Activated CD4-positive, alpha-beta memory T cell treated with anti-CD3 and anti-CD28 coated beads, Interleukin-2, amount 10 ng/mL, durations not matched to agents 7 days and 5 days (primary cell): ENCODE measurements at regions of chr11 and their contacts with region 1.

Region 1: DNA sequence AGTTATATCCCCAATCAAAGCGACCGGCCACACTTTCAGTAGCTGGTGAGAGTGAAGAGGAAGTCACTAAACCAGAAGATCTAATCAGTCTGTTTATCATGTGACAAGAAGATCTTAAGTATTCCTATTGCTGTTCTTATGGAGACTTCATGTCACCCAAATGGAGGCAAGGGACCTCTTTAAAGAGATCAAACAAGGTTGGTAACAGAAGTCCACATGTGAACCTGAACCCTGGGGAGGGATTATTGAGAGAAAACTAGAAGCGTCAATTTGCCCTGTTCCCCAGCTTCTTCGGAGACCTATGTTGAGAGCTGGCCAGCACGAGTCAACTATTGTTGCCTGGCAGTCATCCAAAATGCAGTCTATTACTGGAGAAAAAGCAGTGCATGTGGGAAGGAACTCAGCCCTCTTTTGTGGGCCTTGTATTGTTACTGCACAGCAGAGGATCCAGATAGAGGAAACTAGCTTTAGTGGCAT is 76.9 kb upstream of the CTSC start:
- DNase-seq: no peak
- H3K4me3 Mint-ChIP-seq: peak overlapping the region; percentile 62
- H3K27ac Mint-ChIP-seq: peak overlapping the region; percentile 89
- H3K4me1 Mint-ChIP-seq: peaks cover 72% of the 10 kb centered on the region
- H3K27me3 Mint-ChIP-seq: no peaks in the 10 kb centered on the region

Region 2: GRCh38 chr11:88327061-88327460 is 87.4 kb before region 1 on chr11:
- CTCF ChIA-PET with region 1: no interaction called
- POLR2A ChIA-PET with region 1: interaction called, 17 read pairs
- DNase-seq: no peak
- H3K4me3 Mint-ChIP-seq: peak overlapping the region; percentile 5
- H3K27ac Mint-ChIP-seq: no peak overlapping the region
- H3K4me1 Mint-ChIP-seq: peaks cover 95% of the 10 kb centered on the region
- H3K27me3 Mint-ChIP-seq: no peaks in the 10 kb centered on the region

Region 3: DNA sequence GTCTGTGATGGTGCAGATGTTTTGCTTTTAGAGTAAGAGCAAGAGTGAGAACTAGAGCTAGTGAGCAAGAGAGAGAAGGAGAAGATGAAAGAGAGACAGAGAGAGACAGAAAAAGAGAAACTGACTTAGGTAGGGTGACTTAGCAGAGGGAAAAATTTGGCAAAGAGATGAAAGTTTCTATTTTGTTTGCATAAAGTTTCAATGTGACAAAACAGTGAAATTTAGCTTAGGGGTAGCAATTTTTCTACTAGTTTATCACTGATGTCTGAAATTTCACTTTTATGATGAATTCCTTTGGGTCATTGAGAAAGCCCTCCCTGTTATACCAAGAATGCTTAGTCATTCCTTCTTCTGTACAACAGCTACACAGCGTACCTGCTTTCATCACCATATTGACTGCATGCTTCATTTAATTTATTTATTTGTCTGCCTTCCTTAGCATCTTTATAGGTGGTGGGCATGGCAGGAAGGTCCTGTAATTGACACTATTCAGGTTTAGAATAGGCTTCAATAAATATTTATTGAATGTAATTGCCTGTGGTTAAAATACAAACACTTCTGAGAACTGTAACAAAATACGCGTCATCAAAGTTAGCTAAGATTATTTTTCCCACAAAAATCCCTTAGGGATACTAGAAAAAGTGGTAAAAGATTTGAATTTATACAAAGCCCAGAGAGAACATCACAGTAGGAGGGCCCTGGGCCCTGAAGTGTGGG is 56.9 kb before region 1 on chr11:
- CTCF ChIA-PET with region 1: interaction called, 3 read pairs
- POLR2A ChIA-PET with region 1: interaction called, 17 read pairs
- DNase-seq: no peak
- H3K4me3 Mint-ChIP-seq: peak overlapping the region; percentile 55
- H3K27ac Mint-ChIP-seq: peak overlapping the region; percentile 88
- H3K4me1 Mint-ChIP-seq: peaks cover 53% of the 10 kb centered on the region
- H3K27me3 Mint-ChIP-seq: no peaks in the 10 kb centered on the region

Region 4: DNA sequence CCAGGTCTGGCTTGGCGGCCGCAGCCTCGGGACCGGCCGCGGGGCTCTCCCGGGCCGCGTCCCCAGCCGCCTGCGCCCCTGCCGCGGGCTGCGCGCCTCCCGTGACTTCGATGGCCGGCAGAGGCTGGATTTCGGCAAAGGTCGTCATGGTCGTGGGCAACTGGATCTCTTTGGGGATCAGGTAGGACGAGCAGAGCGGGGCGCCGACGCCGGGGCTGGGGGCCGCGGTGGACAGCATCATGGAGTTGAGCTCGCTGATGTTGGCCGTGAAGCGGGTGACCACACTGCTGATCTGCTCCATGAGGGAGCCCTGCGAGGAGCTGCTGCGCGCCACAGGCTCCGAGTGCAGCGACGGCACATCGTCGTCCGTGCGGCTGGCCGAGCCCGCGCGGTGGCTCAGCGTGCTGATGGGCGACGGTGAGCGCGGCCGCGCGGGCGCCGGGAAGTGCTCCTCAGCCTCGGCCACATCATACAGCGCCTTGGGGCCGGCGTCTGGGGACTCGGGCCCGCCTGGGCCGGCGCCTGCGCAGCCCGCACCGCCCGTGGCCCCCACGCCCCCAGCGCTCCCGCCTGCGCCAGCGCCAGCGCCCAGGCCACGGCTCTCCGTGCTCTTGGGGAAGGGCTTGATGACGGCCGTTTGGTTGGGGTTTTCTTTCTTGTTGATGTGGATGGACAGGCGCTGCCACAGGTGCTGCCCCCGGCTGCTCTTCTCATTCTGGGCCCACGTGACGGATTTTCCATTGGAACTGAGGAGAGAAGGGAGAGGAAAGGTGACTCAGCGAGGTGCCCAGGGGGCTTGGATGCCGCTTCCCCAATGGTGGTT is 94.5 kb after region 1 on chr11:
- CTCF ChIA-PET with region 1: no interaction called
- POLR2A ChIA-PET with region 1: no interaction called
- DNase-seq: peak; percentile 29
- H3K4me3 Mint-ChIP-seq: peak overlapping the region; percentile 69
- H3K27ac Mint-ChIP-seq: no peak overlapping the region
- H3K4me1 Mint-ChIP-seq: peaks cover 12% of the 10 kb centered on the region
- H3K27me3 Mint-ChIP-seq: peaks cover 74% of the 10 kb centered on the region